SK-N-SH (cell line): ENCODE measurements at regions of chr4 and their contacts with region 1.

Region 1: GRCh38 chr4:38675146-38676121 is 11.4 kb downstream of the KLF3 start:
- DNase-seq: peak; percentile 73
- H3K4me3 ChIP-seq: peak overlapping the region in 1 of 2 experiments; percentile 29; a peak in 1 of 4 replicates
- H3K27ac ChIP-seq: peak overlapping the region; percentile 51 to 85; a peak in 3 of 4 replicates
- H3K4me1 ChIP-seq: peaks cover 46 to 55% of the 10 kb centered on the region in 2 experiments
- H3K27me3 ChIP-seq: no peaks in the 10 kb centered on the region
- CTCF ChIP-seq: peak; percentile 97
- EP300 ChIP-seq: no peak
- RAD21 ChIP-seq: peak; percentile 98

Region 2: GRCh38 chr4:38069271-38069760 is 606.1 kb before region 1 on chr4:
- CTCF ChIA-PET with region 1: interaction called, 13 read pairs
- POLR2A ChIA-PET with region 1: no interaction called
- DNase-seq: peak; percentile 53
- H3K4me3 ChIP-seq: no peak overlapping the region
- H3K27ac ChIP-seq: peak overlapping the region in 1 of 2 experiments; percentile 36; a peak in 1 of 4 replicates
- H3K4me1 ChIP-seq: peaks cover 4 to 6% of the 10 kb centered on the region in 2 experiments; a peak in 2 of 4 replicates
- H3K27me3 ChIP-seq: no peaks in the 10 kb centered on the region
- CTCF ChIP-seq: peak; percentile 71
- EP300 ChIP-seq: no peak
- RAD21 ChIP-seq: peak; percentile 76

Region 3: GRCh38 chr4:38324861-38325628 is 350.4 kb before region 1 on chr4:
- CTCF ChIA-PET with region 1: interaction called, 97 read pairs
- POLR2A ChIA-PET with region 1: interaction called, 6 read pairs
- DNase-seq: no peak
- H3K4me3 ChIP-seq: no peak overlapping the region
- H3K27ac ChIP-seq: no peak overlapping the region
- H3K4me1 ChIP-seq: peaks cover 4 to 17% of the 10 kb centered on the region in 2 experiments; a peak in 3 of 4 replicates
- H3K27me3 ChIP-seq: no peaks in the 10 kb centered on the region
- CTCF ChIP-seq: no peak
- EP300 ChIP-seq: no peak
- RAD21 ChIP-seq: no peak

Region 4: GRCh38 chr4:38659346-38659745 is 16.1 kb before region 1 on chr4:
- CTCF ChIA-PET with region 1: interaction called, 10 read pairs
- POLR2A ChIA-PET with region 1: no interaction called
- DNase-seq: no peak
- H3K4me3 ChIP-seq: no peak overlapping the region
- H3K27ac ChIP-seq: no peak overlapping the region
- H3K4me1 ChIP-seq: peaks cover 0 to 9% of the 10 kb centered on the region in 2 experiments; a peak in 2 of 4 replicates
- H3K27me3 ChIP-seq: no peaks in the 10 kb centered on the region
- CTCF ChIP-seq: no peak
- EP300 ChIP-seq: no peak
- RAD21 ChIP-seq: no peak